ENCODE measurements at regions of chr2 and their contacts with region 1.

Region 1: GRCh38 chr2:233331536-233331935 is 22.8 kb upstream of the DGKD start:
- DNase-seq: peak; percentile 93
- ATAC-seq: peak; percentile 94
- H3K4me3 Mint-ChIP-seq: peak overlapping the region; percentile 46
- H3K27ac Mint-ChIP-seq: peak overlapping the region; percentile 96
- H3K4me1 Mint-ChIP-seq: peaks cover 47% of the 10 kb centered on the region
- H3K27me3 Mint-ChIP-seq: no peaks in the 10 kb centered on the region

Region 2: DNA sequence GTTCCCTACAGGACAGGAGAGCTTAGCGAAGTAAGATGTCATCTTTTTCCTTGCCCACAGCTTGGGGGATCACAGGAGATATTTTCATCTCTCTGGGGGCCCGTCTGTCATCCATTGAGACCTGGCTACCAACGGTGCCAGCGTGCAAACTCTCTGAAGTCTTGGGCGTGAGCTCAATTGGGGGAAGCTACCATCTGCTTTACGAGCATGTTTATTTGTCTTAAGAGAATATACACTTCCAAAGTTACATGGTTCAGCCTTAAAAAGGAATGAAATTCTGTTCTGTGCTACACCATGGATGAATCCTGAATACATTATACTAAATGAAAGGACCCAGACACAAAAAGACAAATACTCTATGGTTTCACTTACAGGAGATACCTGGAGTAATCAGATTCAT is 10.4 kb before region 1 on chr2:
- CTCF ChIA-PET with region 1: interaction called, 12 read pairs
- DNase-seq: no peak
- ATAC-seq: no peak
- H3K4me3 Mint-ChIP-seq: no peak overlapping the region
- H3K27ac Mint-ChIP-seq: no peak overlapping the region
- H3K4me1 Mint-ChIP-seq: peaks cover 16% of the 10 kb centered on the region
- H3K27me3 Mint-ChIP-seq: peaks cover 33% of the 10 kb centered on the region

Region 3: DNA sequence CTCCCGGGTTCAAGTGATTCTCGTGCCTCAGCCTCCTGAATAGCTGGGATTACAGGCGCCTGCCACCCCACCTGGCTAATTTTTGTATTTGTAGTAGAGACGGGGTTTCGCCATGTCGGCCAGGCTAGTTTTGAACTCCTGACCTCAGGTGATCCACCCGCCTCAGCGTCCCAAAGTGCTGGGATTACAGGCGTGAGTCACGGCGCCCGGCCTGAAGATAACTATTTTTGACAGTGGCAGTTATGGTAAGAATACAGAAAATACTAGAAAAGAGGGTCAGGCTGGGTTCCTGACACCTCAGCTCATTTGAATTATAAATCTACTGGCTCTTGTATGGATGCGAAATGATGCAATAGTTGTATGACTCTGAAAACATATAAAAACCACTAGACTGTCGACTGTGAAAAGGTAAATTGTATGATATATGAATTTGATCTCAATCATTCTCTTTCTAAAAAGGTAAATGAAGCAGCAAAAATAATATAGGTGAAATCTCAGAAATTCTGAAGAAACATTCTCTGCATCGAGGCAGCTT is 11.7 kb after region 1 on chr2:
- CTCF ChIA-PET with region 1: interaction called, 16 read pairs
- DNase-seq: no peak
- ATAC-seq: no peak
- H3K4me3 Mint-ChIP-seq: no peak overlapping the region
- H3K27ac Mint-ChIP-seq: no peak overlapping the region
- H3K4me1 Mint-ChIP-seq: no peaks in the 10 kb centered on the region
- H3K27me3 Mint-ChIP-seq: peaks cover 7% of the 10 kb centered on the region

Region 4: GRCh38 chr2:233953087-233953801 is 621.7 kb after region 1 on chr2:
- CTCF ChIA-PET with region 1: no interaction called
- DNase-seq: no peak
- ATAC-seq: no peak
- H3K4me3 Mint-ChIP-seq: no peak overlapping the region
- H3K27ac Mint-ChIP-seq: no peak overlapping the region
- H3K4me1 Mint-ChIP-seq: no peaks in the 10 kb centered on the region
- H3K27me3 Mint-ChIP-seq: peaks cover 40% of the 10 kb centered on the region